ENCODE measurements at regions of chr14 and their contacts with region 1.

Region 1: GRCh38 chr14:52824507-52824906 is 33.1 kb upstream of the GNPNAT1 start:
- DNase-seq: no peak
- H3K4me3 Mint-ChIP-seq: no peak overlapping the region
- H3K27ac Mint-ChIP-seq: no peak overlapping the region
- H3K4me1 Mint-ChIP-seq: peaks cover 5% of the 10 kb centered on the region
- H3K27me3 Mint-ChIP-seq: peaks cover 9% of the 10 kb centered on the region

Region 2: DNA sequence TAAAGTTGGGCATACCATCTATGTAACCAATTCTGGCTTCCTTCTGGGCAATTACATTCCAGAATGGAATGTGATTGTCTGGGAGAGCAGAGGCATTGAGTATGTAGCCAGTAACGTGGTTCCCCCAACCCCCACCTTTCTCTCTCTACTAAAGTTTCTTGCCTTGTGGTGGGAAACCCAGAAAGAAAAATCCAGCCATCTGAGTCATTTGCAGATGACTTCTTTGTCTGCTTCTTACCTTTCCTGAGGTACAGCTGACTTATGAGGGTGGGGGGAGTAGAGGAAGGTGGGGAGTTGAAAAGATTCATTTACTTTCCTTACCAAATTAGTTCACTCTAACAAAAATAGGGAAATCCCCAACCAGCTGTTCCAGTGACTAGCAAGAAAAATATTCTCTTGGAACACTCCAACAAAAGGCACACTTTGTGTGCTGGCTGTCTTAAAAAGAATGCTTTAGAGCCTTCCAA is 1284.9 kb before region 1 on chr14:
- intact Hi-C with region 1: no loop called
- DNase-seq: no peak
- H3K4me3 Mint-ChIP-seq: no peak overlapping the region
- H3K27ac Mint-ChIP-seq: no peak overlapping the region
- H3K4me1 Mint-ChIP-seq: no peaks in the 10 kb centered on the region
- H3K27me3 Mint-ChIP-seq: peaks cover 10% of the 10 kb centered on the region

Region 3: DNA sequence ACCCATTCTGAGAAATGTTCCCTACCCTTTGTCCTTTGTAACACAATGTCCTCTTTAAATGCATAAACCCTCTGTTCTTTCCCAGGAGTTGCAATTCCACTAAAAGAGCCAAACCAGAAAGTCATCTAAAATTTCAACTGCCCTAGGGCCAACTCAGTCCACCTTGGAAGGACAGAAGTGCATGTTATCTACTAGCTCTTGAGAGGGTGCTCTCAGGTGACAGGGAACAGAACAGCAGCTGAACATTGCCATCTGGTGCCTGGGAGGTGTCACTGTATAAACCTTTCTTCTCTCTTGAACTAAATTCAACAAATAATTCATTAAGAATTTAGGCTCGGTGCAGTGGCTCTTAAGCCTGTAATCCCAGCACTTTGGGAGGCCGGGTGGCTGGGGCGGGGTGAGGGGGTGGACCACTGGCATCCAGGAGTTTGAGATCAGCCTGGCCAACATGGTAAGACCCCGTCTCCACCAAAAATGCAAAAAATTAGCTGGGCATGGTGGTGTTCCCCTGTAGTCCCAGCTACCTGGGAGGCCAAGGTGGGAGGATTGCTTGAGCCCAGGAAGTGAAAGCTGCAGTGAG is 136.6 kb after region 1 on chr14:
- intact Hi-C with region 1: loop called (anchors 1 kb)
- DNase-seq: peak; percentile 80
- H3K4me3 Mint-ChIP-seq: no peak overlapping the region
- H3K27ac Mint-ChIP-seq: no peak overlapping the region
- H3K4me1 Mint-ChIP-seq: peaks cover 2% of the 10 kb centered on the region
- H3K27me3 Mint-ChIP-seq: peaks cover 2% of the 10 kb centered on the region

Region 4: GRCh38 chr14:53055003-53055402 is 230.5 kb after region 1 on chr14:
- intact Hi-C with region 1: loop called (anchors 2 kb)
- DNase-seq: peak; percentile 61
- H3K4me3 Mint-ChIP-seq: no peak overlapping the region
- H3K27ac Mint-ChIP-seq: no peak overlapping the region
- H3K4me1 Mint-ChIP-seq: peaks cover 4% of the 10 kb centered on the region
- H3K27me3 Mint-ChIP-seq: no peaks in the 10 kb centered on the region

Region 5: GRCh38 chr14:53180268-53181221 is 356.0 kb after region 1 on chr14:
- intact Hi-C with region 1: loop called (anchors 10 kb)
- DNase-seq: peak; percentile 82
- H3K4me3 Mint-ChIP-seq: peak overlapping the region; percentile 26
- H3K27ac Mint-ChIP-seq: peak overlapping the region; percentile 74
- H3K4me1 Mint-ChIP-seq: peaks cover 36% of the 10 kb centered on the region
- H3K27me3 Mint-ChIP-seq: peaks cover 1% of the 10 kb centered on the region

Region 6: DNA sequence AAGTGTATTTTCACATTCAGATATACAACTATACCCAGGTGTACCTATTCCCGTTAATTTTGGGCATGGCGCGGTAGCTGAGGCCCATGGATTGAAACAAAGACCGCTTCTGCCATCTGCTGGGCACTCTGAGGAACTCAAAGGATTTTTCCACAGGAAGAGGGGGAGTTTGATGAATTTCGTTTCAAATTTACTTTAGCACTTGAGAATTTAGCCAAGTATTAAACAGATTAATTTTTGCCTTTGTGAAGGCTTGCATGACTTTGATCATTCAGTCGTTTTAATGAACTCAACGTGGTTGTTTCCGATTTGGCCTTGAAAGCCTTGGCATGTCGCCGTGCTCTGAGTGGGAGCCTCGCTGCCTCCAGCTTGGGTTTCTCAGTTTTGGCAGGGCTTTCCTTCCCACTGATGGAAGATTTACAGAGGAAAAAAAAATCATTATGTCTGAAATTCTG is 481.8 kb after region 1 on chr14:
- intact Hi-C with region 1: loop called (anchors 1 kb)
- DNase-seq: peak; percentile 77
- H3K4me3 Mint-ChIP-seq: peak overlapping the region; percentile 55
- H3K27ac Mint-ChIP-seq: no peak overlapping the region
- H3K4me1 Mint-ChIP-seq: peaks cover 11% of the 10 kb centered on the region
- H3K27me3 Mint-ChIP-seq: peaks cover 8% of the 10 kb centered on the region

Region 7: DNA sequence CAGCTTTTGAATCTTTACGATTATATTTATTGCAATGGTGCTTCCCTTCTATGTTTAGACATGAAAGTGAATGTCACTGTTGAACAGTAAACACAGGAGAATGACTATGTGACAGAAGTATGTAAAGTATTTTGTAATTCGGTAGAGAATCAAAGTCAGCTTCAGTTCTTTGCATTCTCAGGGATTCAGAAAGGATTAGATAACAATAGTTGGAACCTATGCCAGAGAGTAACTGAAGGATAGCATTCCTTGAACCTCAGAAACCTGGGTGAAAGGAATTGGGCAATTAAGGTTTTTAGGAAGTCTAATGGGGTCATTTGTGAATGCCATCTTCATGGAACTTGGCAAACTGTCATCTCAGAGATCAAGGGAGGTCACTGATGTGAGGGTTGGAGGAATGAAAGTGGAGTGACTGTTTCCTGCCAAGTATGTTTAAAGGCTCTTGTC is 633.9 kb after region 1 on chr14:
- intact Hi-C with region 1: no loop called
- DNase-seq: no peak
- H3K4me3 Mint-ChIP-seq: no peak overlapping the region
- H3K27ac Mint-ChIP-seq: no peak overlapping the region
- H3K4me1 Mint-ChIP-seq: no peaks in the 10 kb centered on the region
- H3K27me3 Mint-ChIP-seq: peaks cover 4% of the 10 kb centered on the region

Measured in activated CD4-positive, alpha-beta T cell treated with anti-CD3 and anti-CD28 coated beads, Interleukin-2, amount 10 ng/mL, durations not matched to agents 24 days and 14 days (primary cell).